A549 (cell line): ENCODE measurements at regions of chr17 and their contacts with region 1.

Region 1: GRCh38 chr17:40457964-40458791 is 14.9 kb downstream of the IGFBP4 start:
- DNase-seq: peak in 1 of 2 experiments; percentile 68
- ATAC-seq: peak in 1 of 2 experiments; percentile 7; a peak in 3 of 6 replicates
- H3K4me3 ChIP-seq: peak overlapping the region; percentile 16
- H3K27ac ChIP-seq: peak overlapping the region; percentile 71 to 90
- H3K4me1 ChIP-seq: peaks cover 100% of the 10 kb centered on the region
- CTCF ChIP-seq: no peak
- EP300 ChIP-seq: no peak; a peak in 1 of 5 replicates
- POLR2A ChIP-seq: no peak
- RAD21 ChIP-seq: no peak

Region 2: GRCh38 chr17:40542558-40543411 is 84.6 kb after region 1 on chr17:
- CTCF ChIA-PET with region 1: interaction called, 822 read pairs
- POLR2A ChIA-PET with region 1: interaction called, 11 read pairs
- DNase-seq: peak; percentile 99 to 100
- ATAC-seq: peak; percentile 87 to 90
- H3K4me3 ChIP-seq: no peak overlapping the region
- H3K27ac ChIP-seq: peak overlapping the region; percentile 95 to 99
- H3K4me1 ChIP-seq: peaks cover 71% of the 10 kb centered on the region
- CTCF ChIP-seq: no peak
- EP300 ChIP-seq: peak; percentile 100
- POLR2A ChIP-seq: no peak
- RAD21 ChIP-seq: peak; percentile 4 to 55; a peak in 4 of 5 replicates